Right ventricle myocardium inferior (tissue), 1 donor: ENCODE measurements at regions of chr1 and their contacts with region 1.

Region 1: DNA sequence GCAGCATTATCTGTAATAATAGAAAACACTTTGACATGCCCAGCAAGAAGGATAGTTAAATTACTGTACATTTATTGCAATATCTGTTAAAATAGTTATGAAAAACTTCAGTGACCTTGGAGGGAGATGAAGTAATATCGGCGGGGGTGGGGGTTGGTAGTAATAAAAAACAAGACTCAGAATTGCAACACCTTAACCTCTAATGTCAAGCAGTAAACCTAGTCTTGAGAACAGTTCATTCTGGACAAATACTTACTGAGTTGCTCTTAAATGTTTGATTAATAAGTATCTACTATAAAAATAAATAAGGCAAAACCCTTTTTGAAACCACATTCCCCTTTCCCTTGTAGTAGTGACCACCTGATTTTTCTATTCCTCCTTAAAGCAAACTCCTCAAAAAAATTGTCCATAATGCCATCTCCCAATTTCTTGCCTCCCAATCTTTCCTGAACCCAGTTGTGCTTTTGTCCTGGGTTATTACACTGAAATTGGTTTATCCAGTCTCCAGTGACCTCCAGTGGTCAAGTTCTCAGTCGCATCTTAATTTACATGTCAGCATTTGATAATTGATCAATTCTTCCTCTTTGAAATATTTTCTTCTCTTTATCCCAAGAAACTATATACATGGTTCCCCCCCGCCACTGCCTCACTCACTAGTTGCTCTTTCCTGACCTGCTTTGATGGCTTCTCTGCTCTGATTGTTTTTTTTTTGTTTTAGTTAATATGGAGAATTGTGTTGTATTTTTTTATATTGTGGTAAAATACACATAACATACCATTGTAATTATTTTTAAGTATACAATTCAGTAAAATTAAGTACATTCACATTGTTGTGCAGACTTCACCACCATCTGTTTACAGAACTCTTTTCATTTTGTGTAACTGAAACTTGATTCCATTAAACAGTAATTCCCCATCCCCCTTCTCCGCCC is 36.8 kb downstream of the RAP1A start:
- DNase-seq: no peak
- ATAC-seq: peak; percentile 67

Region 2: DNA sequence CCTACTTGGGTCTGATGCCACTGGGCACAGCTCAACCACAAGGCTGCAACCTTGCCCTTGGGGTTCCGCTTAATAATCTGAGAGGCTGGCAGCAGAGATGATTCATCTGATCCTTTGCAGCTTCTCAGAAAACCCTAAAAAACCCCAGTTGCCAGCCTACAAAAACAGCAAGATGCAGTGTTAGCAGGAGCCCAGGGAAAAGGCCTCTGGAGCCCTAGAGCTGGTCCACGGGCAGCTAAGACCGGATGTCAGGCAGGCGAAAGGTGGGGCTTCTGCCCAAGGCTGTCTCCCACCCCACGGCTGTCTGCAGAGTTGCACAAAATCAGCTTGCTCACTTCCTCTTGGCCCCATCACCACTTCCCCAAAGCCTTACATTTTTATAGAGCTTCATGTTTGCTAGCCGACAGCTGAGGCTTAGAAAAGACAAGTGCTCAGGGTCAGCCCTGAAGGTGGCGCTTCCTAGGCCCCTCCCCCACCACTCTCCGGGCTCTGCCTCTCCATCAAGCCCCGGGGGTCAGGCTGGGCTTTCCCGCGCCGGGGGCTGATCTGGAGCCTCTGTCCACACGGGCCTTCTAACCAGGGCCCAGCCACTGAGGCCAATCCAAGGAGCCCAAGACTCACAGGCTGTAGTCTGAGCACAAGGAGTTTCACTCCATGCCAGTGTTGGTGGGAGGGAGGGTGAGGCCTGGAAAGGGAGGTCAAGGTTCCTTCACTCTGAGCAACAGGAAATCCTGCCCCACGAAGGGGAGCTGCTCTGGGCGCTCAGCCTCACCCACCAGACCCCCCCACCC is 148.7 kb before region 1 on chr1:
- intact Hi-C with region 1: loop called (anchors 1 kb)
- DNase-seq: peak; percentile 91
- ATAC-seq: peak; percentile 73

Region 3: DNA sequence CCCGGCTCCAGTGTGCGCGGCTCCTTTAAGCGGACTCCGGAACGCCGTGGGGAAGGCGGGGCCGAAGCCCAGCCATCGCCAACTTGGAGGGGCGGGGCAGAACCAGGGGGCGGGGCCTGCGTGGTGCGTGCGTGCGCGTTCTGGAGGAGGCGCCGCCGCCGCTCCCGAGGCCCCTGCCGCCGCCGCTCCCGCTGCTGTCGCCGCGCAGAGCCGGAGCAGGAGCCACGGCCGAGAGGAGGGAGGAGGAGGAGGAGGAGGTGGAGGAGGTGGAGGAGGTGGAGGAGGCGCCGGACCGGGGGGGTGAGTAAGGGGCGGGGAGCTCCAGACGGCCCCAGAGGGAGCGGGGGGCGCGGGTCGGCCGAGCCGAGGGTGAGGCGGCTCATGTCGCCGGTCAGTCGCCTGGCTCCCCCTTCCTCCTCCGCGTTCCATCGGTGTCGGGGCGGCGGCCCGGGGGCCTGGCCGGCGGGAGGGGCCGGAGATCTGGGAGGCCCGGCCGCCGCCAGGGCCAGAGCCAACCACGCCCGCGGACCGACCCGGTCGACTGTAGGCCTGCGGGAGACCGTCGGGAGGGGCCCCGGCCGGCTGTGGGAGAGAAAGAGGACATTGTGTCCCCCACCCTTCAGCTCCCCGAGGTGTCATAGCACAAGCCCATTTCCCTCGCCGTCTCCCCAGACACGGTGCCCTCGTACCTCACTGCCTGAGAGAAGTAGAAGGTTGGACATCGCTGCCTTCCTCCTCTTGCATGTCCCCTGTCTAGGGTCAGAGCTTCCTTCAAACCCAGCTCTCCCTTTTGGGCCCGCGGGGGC is 36.5 kb before region 1 on chr1 and contains the start of gene RAP1A:
- intact Hi-C with region 1: loop called (anchors 5 kb)
- DNase-seq: peak; percentile 96
- ATAC-seq: peak; percentile 97
- total RNA-seq, gene RAP1A: 107 TPM